Cardiac septum (tissue), 1 donor: ENCODE measurements at regions of chr15 and their contacts with region 1.

Region 1: DNA sequence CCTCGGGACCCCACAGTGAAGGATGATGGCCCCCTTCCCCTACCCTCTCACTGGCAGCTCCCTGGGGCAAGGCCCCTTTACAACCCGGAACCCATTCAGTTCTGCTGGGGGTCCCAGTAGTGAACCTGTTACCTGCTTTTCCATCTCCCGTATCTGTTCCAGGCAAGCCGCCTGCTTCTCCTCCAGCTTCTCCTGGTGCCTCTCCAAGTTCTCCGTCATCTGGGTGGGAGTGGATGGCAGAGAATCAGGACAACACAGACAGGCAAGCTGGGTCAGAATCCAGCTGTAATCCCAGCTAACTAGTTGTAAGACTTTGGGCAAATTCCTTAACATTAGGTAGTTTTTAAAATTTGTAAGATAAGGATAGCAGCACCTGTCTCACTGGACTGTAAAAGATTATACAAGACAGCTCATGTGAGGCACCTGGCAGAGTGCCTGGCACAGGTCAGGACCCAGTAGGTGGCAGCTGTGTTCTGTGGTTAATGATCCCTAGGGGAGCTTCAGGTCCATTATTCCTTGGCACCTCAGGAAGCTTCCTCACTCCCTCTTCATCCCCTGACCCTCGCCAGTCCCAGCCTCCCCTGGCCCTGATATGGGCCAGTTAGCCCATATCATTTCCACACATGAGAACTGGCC is 6.4 kb upstream of the ANKRD63 start:
- DNase-seq: no peak

Region 2: DNA sequence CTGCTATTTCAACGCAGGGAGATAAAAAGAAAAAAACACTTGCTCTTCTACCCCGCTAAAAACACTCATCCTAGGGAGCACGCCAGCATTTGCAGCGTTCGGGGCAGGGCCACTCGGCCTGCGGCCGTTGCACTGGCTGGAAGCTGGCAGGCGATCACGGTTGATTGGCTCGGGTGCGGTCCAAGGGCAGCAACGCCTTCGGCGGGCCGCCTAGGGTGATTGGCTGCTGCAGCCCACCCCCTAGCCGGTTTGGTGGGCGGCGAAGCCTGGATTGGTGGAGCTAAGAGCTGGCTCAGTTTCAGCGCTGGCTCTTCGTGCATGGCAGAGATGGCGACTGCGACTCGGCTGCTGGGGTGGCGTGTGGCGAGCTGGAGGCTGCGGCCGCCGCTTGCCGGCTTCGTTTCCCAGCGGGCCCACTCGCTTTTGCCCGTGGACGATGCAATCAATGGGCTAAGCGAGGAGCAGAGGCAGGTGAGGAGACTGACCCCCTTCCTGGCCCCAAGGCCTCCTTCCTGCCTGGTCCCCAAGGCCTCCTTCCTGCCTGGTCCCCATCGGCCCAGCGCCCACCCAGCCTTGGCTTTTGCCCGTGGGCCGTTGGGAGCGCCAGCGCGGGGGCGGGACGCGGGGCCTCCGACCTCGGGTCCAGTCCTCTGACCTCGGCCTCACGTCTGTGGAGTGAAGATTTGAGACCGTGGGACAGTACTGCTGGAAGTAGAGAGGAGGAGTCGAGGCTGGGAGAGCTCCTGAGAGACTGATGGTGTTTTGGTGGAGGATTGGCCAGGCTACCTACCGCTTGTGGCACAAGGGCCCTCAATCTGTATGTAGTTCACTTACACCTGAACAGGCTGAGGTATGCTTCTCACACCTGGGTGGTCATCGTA is 116.5 kb after region 1 on chr15 and contains the start of gene IVD:
- intact Hi-C with region 1: loop called (anchors 5 kb)
- DNase-seq: peak; percentile 97
- total RNA-seq, gene IVD: 106 TPM

Region 3: GRCh38 chr15:40743921-40744814 is 454.9 kb after region 1 on chr15:
- intact Hi-C with region 1: no loop called
- DNase-seq: no peak